ENCODE measurements at regions of chr10 and their contacts with region 1.

Region 1: DNA sequence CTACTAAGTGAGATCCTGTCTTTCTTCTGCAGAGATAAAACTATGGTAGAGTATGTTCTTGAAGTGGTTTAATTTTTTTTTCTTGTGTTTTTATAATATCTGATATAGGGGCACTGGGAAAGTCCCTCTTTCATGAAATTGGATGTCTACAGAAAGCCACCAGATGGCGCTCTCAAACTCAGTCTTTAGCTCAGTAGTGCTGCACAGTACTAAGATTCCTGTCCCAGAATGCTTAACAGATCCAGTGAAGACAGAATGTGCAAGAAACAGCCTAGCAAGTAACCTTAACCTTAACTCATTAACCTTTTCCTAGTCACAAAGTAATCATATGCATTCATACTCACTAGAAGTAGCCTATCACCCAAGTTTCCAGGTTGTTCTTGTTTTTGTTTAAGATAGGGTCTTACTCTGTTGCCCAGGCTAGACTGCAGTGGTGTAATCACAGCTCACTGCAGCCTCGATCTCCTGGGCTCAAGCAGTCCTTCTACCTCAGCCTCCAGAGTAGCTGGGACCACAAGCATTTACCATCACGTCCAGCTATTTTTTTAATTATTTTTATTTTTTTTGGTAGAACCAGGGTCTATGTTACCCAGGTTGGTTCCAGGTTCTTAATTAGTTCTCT is 56.7 kb downstream of the IDE start:
- DNase-seq: peak; percentile 76
- H3K4me3 ChIP-seq: no peak overlapping the region
- H3K27ac ChIP-seq: no peak overlapping the region
- H3K4me1 ChIP-seq: no peaks in the 10 kb centered on the region
- H3K27me3 ChIP-seq: no peaks in the 10 kb centered on the region
- CTCF ChIP-seq: peak; percentile 35 to 69 (median 66)
- EP300 ChIP-seq: no peak
- POLR2A ChIP-seq: no peak

Region 2: DNA sequence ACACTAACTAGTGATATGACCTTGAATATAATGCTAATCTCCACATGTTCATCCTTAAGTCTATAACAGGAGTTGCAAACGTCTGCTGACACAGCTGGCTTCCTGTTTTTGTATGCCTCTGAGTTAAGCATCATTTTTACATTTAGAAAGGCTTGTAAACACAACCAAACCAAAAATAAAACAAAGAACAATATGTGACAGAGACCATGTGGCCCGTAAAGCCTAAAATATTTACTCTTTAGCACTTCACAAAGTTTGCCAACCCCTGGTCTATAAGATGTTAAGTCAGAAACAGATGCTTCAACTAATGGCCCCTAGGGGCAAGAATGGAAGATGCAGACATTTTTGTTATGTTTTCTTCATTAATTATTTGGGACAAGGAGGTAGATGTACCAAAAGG is 335.6 kb before region 1 on chr10:
- intact Hi-C with region 1: no loop called
- DNase-seq: no peak
- H3K4me3 ChIP-seq: no peak overlapping the region
- H3K27ac ChIP-seq: no peak overlapping the region
- H3K4me1 ChIP-seq: peaks cover 0 to 7% (median 0%) of the 10 kb centered on the region in 4 donors
- H3K27me3 ChIP-seq: no peaks in the 10 kb centered on the region
- CTCF ChIP-seq: no peak
- EP300 ChIP-seq: no peak
- POLR2A ChIP-seq: no peak

Region 3: GRCh38 chr10:92573798-92574547 is 56.8 kb after region 1 on chr10 and contains the start of gene IDE:
- intact Hi-C with region 1: loop called (anchors 1 kb)
- DNase-seq: peak; percentile 93
- H3K4me3 ChIP-seq: peak within 1 kb of the TSS; percentile 82 to 97 (median 89)
- H3K27ac ChIP-seq: peak within 1 kb of the TSS; percentile 95 to 98 (median 98)
- H3K4me1 ChIP-seq: peaks cover 2 to 40% (median 23%) of the 10 kb centered on the region in 4 donors
- H3K27me3 ChIP-seq: no peaks in the 10 kb centered on the region
- CTCF ChIP-seq: peak; percentile 68 to 86 (median 76)
- EP300 ChIP-seq: no peak
- POLR2A ChIP-seq: peak; percentile 28 to 29
- total RNA-seq, gene IDE: 23.3 to 32.9 (median 28.8) TPM

Region 4: DNA sequence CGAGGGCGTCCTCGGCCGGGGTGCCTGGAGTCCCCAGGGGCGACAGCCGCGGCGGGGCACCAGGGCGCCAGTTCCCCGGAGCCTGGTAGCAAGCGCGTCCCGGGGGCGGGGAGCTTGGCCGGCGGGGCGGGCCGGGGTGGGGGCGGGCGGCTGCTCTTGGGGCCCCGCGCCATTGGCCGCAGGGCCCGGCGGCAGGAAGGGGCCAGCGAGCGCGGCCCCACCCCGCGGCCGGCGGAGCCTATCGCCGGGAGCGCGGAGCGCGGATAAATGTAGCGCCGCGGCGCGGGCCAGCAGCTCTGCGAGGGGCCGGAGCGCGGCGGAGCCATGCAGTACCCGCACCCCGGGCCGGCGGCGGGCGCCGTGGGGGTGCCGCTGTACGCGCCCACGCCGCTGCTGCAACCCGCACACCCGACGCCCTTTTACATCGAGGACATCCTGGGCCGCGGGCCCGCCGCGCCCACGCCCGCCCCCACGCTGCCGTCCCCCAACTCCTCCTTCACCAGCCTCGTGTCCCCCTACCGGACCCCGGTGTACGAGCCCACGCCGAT is 172.6 kb after region 1 on chr10 and contains the start of gene HHEX:
- intact Hi-C with region 1: loop called (anchors 10 kb)
- DNase-seq: peak; percentile 77
- H3K4me3 ChIP-seq: peak within 1 kb of the TSS; percentile 73 to 81 (median 76)
- H3K27ac ChIP-seq: peak within 1 kb of the TSS; percentile 79 to 92 (median 86)
- H3K4me1 ChIP-seq: peaks cover 0 to 34% (median 15%) of the 10 kb centered on the region in 4 donors
- H3K27me3 ChIP-seq: peaks cover 0 to 27% (median 2%) of the 10 kb centered on the region in 3 donors
- CTCF ChIP-seq: no peak
- EP300 ChIP-seq: no peak
- POLR2A ChIP-seq: no peak
- total RNA-seq, gene HHEX: 3.5 to 8.9 (median 6.6) TPM